Motor neuron (in vitro differentiated cells): ENCODE measurements at regions of chr11 and their contacts with region 1.

Region 1: DNA sequence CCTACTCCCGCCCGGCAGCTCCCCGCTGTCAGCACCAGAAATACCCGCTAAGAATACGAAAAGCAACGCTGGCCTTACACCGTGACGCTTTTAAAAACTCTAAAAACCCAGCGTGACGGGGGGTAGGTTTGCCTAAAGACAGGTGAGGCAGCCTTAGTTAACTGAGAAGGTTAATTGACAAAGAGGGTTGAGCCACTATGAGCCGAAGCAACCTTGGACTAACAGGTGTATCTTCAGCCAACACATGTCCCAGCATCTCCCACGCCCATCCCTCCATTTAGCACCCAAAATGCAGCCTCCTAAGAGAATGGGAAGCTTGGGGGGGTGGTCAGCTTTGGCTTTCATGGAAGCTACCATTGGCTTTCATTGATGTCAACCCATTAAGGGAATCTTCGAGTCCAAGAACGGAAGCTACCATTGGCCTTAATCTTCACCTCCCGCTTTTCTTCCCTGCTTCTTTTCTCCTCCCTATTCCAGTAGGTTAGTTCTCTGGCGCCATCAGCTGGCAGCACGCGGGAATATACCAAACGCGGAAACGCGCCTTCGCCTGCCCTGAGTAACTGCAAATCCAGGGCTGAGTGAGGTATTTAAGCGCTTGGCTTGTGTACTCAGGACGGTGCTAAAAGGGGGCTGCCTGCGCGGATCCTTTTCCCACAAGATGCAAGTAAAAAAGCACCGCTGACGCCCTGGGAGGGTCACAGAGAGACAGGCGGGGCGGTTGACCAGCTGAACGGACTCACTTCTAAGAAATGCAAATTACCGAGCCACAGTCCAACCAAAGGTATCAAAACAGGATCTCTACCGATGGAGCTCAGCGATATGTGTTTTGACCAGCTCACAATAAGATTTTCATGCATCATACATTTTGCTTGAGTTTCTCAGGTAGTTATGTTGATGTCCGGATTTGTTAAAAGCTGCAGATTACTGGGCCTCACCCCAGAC is 38.5 kb upstream of the GLYATL1 start:
- ATAC-seq: peak; percentile 19 to 79 (median 48)
- H3K4me3 ChIP-seq: peak overlapping the region in 4 of 5 donors; percentile 18 to 32 (median 20)
- H3K27ac ChIP-seq: no peak overlapping the region
- H3K4me1 ChIP-seq: peaks cover 9 to 29% of the 10 kb centered on the region in 2 donors

Region 2: DNA sequence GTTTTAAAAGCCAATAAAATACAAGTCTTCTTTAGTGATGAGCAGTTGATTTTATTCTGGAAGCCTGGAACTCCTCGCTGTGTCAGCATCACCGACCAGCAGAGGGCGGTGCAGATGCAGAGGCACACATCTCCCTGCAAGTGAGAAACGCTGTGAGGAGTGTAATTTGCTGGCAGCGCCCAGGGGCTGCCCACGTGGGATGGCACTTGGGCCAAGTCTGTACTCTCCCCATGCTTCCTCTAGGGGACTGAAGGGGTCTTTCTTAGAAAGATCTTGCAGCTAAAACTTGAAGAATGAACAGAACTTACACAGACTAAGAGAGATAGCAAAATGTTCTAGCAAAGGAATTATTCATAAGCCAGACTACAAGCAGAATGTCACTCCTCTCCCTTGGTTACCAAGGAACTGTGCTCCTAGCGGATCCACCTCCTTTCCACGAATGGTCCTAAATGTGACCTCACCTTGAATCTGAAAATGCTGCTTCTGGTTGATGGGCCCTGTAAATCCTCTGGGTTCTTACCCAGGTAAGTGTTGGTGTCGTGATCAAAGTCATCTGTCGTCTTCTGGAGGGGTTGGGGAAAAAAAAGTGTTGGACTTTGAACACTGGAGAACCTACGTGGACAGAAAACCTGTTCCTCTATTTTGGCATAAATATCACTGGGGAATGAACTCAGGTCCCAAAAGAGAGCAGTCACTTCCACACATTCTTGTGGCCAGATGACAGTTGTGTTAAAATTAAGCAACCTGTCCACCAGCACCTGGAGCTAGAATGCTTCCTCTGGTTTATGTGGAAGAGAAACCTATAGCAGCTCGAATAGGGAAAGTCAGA is 246.5 kb before region 1 on chr11:
- in situ Hi-C with region 1: loop called in 1 of 9 experiments (anchors 25 kb)
- ATAC-seq: peak; percentile 78 to 100 (median 94)
- H3K4me3 ChIP-seq: no peak overlapping the region
- H3K27ac ChIP-seq: no peak overlapping the region
- H3K4me1 ChIP-seq: no peaks in the 10 kb centered on the region

Region 3: DNA sequence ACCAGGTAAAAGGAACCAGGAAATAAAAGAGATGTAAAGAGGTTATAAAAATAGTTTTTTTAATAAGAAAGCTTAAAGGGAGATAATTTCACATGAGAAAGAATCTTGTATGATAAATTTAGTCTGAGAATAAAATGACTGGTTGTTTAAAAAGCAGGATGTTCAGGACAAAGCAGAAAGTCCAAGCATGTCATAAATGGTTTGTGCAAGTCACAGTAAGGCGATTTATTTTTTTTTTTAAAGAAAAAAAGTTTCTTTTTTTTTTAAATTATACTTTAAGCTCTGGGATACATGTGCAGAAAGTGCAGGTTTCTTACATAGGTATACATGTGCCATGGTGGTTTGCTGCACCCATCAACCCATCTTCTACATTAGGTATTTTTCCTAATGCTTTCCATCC is 87.1 kb before region 1 on chr11:
- in situ Hi-C with region 1: no loop called
- ATAC-seq: no peak
- H3K4me3 ChIP-seq: no peak overlapping the region
- H3K27ac ChIP-seq: no peak overlapping the region
- H3K4me1 ChIP-seq: no peaks in the 10 kb centered on the region

Region 4: DNA sequence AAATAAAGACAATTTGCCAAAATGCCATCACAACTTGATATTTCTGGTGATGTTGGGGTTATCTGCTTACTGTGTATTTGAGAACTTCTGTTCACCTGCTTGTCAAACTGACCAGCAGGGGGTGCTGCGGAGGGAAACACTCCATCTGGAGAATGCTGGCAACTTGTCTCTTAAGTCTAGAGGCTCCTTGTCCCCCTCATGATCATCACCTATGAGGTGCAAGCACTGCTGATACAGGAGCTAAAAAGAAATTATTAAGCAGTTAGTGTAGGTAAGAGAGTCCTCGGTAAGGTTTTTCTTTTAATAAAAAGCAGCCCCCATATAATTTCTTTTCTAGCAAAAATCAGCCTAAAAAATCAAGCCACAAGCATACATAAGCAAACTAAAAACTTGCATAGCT is 152.6 kb after region 1 on chr11:
- in situ Hi-C with region 1: loop called in 1 of 9 experiments (anchors 25 kb)
- ATAC-seq: peak in 3 of 8 experiments; percentile 50 to 63 (median 55)
- H3K4me3 ChIP-seq: no peak overlapping the region
- H3K27ac ChIP-seq: no peak overlapping the region
- H3K4me1 ChIP-seq: no peaks in the 10 kb centered on the region

Region 5: DNA sequence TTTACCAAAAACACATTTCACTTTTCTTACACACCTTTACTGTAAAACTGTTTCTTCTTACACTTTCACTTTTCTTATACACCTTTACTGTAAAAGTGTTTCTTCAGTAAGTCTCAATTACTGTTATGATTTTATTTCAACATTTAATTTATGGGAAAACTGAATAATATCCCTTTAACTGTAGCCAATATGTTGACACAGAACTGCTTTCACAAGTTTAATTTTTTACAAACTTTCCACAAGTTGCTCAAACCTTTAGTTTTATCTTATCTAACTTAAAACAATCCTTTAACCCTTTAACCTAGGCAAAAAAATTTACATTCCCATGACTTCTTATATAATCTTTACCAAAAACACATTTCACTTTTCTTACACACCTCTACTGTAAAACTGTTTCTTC is 394.7 kb after region 1 on chr11:
- in situ Hi-C with region 1: no loop called
- ATAC-seq: no peak
- H3K4me3 ChIP-seq: no peak overlapping the region
- H3K27ac ChIP-seq: no peak overlapping the region
- H3K4me1 ChIP-seq: no peaks in the 10 kb centered on the region

Region 6: DNA sequence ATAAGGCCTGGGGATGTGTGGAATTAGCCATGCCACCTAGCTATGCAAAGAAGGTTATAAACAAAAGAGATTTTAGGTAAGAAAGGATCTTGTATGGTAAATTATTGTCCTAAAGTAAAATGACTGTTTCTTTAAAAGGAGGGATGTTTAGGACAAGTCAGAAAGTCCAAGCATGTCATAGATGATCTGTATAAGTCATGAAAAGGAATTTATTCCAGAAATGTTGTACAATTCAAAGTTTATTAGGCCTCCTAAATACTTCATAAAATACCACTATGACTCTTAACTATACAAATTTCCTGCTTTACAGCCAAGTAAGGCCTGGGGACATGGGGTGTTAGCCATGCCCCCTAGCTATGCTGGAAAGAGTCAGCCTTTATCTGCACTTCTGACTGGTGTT is 502.8 kb after region 1 on chr11:
- in situ Hi-C with region 1: no loop called
- ATAC-seq: no peak
- H3K4me3 ChIP-seq: no peak overlapping the region
- H3K27ac ChIP-seq: no peak overlapping the region
- H3K4me1 ChIP-seq: no peaks in the 10 kb centered on the region